ENCODE measurements at regions of chr2 and their contacts with region 1.

Region 1: DNA sequence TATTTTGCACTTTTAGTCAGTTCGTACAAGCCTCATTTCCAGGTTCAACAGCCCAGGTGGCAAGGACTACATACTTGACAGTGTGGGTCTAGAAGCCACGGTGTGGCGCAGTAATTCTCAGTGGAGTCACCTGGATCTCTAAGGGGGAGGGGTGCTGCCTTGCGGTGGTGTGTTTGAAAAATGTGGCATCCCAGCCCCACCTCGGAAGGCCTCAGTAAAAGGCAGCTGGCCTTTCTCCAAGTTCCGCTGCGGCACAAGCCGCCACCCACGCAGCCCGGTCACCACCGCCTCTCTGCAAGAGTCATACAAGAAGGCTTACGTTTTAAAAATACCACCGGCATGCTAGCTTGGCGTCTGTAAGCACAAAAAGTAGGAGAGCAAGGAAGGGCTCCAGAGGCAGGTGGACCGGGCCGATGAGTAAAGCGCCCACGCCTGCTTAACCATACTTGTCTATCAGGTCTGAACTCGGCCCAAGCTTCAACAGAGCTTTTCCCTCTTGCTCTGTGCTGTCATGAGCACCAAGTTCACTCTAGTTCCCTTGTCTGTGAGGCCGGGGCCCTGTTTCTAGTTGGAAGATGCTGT is 49.5 kb downstream of the SPRED2 start:
- DNase-seq: peak; percentile 86
- ATAC-seq: peak; percentile 73
- H3K4me3 ChIP-seq: peak overlapping the region in 1 of 3 experiments; percentile 47; a peak in 3 of 6 replicates
- H3K27ac ChIP-seq: peak overlapping the region; percentile 59
- H3K4me1 ChIP-seq: peaks cover 99% of the 10 kb centered on the region
- H3K27me3 ChIP-seq: no peaks in the 10 kb centered on the region
- CTCF ChIP-seq: peak; percentile 70
- EP300 ChIP-seq: peak in 1 of 2 experiments; percentile 66; a peak in 2 of 4 replicates
- POLR2A ChIP-seq: no peak
- RAD21 ChIP-seq: peak; percentile 61

Region 2: GRCh38 chr2:65227425-65228262 is 155.2 kb before region 1 on chr2 and contains the start of gene ACTR2:
- CTCF ChIA-PET with region 1: no interaction called
- POLR2A ChIA-PET with region 1: interaction called, 10 read pairs
- in situ Hi-C with region 1: no loop called
- intact Hi-C with region 1: no loop called
- DNase-seq: peak; percentile 95
- ATAC-seq: peak; percentile 97
- H3K4me3 ChIP-seq: peak within 1 kb of the TSS; percentile 76 to 99 (median 98)
- H3K27ac ChIP-seq: peak within 1 kb of the TSS; percentile 94
- H3K4me1 ChIP-seq: peaks cover 44% of the 10 kb centered on the region
- H3K27me3 ChIP-seq: peaks cover 0 to 3% of the 10 kb centered on the region in 2 experiments; a peak in 1 of 5 replicates
- CTCF ChIP-seq: peak; percentile 13; the same call in 1 of the 2 replicates
- EP300 ChIP-seq: peak in 1 of 2 experiments; percentile 29; a peak in 1 of 4 replicates
- POLR2A ChIP-seq: peak; percentile 90 to 95
- RAD21 ChIP-seq: peak; percentile 66
- total RNA-seq, gene ACTR2: 100 and 211 TPM in 2 replicates

Region 3: GRCh38 chr2:65264821-65265670 is 117.8 kb before region 1 on chr2:
- CTCF ChIA-PET with region 1: interaction called, 4 read pairs
- POLR2A ChIA-PET with region 1: no interaction called
- in situ Hi-C with region 1: no loop called
- intact Hi-C with region 1: loop called (anchors 1 kb)
- DNase-seq: peak; percentile 84
- ATAC-seq: peak; percentile 79
- H3K4me3 ChIP-seq: no peak overlapping the region
- H3K27ac ChIP-seq: no peak overlapping the region
- H3K4me1 ChIP-seq: no peaks in the 10 kb centered on the region
- H3K27me3 ChIP-seq: no peaks in the 10 kb centered on the region
- CTCF ChIP-seq: peak; percentile 87
- EP300 ChIP-seq: no peak
- POLR2A ChIP-seq: no peak
- RAD21 ChIP-seq: peak; percentile 84; the same call in 1 of the 2 replicates

Region 4: DNA sequence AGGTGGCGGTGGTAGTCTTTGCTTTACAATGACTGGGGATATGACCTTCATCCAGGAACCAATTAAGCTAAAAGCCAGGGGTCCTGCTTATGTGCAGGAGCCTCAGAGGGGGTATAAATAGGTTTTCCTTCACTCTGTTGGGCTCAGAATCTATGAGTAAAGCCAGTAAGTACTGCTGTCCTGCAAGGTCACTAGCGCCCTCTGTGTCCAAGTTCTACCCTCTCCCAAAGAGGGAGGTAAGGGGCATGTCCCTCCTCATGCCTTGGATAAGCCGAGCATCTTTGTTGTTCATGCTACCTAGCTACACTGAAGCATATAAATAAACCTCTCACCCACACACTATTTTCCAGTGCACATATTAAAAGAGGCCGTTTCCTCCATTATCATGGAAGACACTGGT is 29.8 kb before region 1 on chr2:
- CTCF ChIA-PET with region 1: interaction called, 3 read pairs
- POLR2A ChIA-PET with region 1: interaction called, 3 read pairs
- in situ Hi-C with region 1: no loop called
- intact Hi-C with region 1: loop called (anchors 2 kb)
- DNase-seq: no peak
- ATAC-seq: peak; percentile 18; the same call in 1 of the 3 replicates
- H3K4me3 ChIP-seq: no peak overlapping the region
- H3K27ac ChIP-seq: no peak overlapping the region
- H3K4me1 ChIP-seq: peaks cover 85% of the 10 kb centered on the region
- H3K27me3 ChIP-seq: no peaks in the 10 kb centered on the region
- CTCF ChIP-seq: peak; percentile 36
- EP300 ChIP-seq: no peak
- POLR2A ChIP-seq: no peak
- RAD21 ChIP-seq: no peak

Region 5: GRCh38 chr2:65396348-65397026 is 13.6 kb after region 1 on chr2:
- CTCF ChIA-PET with region 1: no interaction called
- POLR2A ChIA-PET with region 1: interaction called, 24 read pairs
- in situ Hi-C with region 1: no loop called
- intact Hi-C with region 1: loop called (anchors 1 kb)
- DNase-seq: peak; percentile 90
- ATAC-seq: peak; percentile 94
- H3K4me3 ChIP-seq: peak overlapping the region in 2 of 3 experiments; percentile 23 to 25; a peak in 4 of 6 replicates
- H3K27ac ChIP-seq: peak overlapping the region; percentile 55
- H3K4me1 ChIP-seq: peaks cover 58% of the 10 kb centered on the region
- H3K27me3 ChIP-seq: no peaks in the 10 kb centered on the region
- CTCF ChIP-seq: no peak
- EP300 ChIP-seq: peak in 1 of 2 experiments; percentile 85; a peak in 2 of 4 replicates
- POLR2A ChIP-seq: no peak
- RAD21 ChIP-seq: no peak

Region 6: DNA sequence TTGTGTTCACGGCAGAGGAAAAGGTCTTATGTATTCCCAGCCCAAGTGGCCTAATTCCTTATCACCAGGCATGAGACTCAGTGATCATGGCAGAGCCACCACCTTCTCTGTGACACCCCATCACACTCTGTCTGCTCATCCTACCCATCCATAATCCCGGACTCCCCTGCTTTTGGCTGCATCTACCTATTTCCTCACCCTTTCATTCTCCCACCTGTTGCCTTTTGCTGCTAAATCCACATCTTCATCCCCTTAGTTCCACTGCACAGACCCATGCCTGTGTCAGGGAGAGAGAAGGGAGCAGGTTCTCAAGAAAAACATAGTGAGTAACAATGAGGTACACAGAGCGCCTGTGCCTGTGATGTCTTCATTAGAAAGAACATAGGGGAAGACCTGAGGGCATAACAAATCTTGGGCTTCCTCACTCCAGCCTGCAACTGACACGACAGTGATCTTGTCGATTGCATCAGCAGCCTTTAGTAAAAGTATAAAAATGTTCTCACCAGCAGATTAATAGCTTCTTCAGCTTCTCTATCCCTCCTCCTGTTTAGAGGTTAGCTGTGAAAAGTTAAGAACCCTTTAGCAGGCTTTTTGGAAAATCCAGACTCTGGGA is 296.0 kb after region 1 on chr2:
- CTCF ChIA-PET with region 1: no interaction called
- POLR2A ChIA-PET with region 1: no interaction called
- in situ Hi-C with region 1: no loop called
- intact Hi-C with region 1: no loop called
- DNase-seq: no peak
- ATAC-seq: no peak
- H3K4me3 ChIP-seq: no peak overlapping the region
- H3K27ac ChIP-seq: no peak overlapping the region
- H3K4me1 ChIP-seq: no peaks in the 10 kb centered on the region
- H3K27me3 ChIP-seq: no peaks in the 10 kb centered on the region
- CTCF ChIP-seq: no peak
- EP300 ChIP-seq: no peak
- POLR2A ChIP-seq: no peak
- RAD21 ChIP-seq: no peak

Measured in HepG2 (cell line).